H1 (cell line): ENCODE measurements at regions of chr1 and their contacts with region 1.

Region 1: GRCh38 chr1:92749024-92749634 is 35.8 kb downstream of the EVI5 start:
- DNase-seq: no peak
- H3K4me3 ChIP-seq: no peak overlapping the region
- H3K27ac ChIP-seq: no peak overlapping the region
- H3K4me1 ChIP-seq: no peaks in the 10 kb centered on the region
- H3K27me3 ChIP-seq: no peaks in the 10 kb centered on the region
- CTCF ChIP-seq: peak; percentile 15 to 75 (median 72)
- EP300 ChIP-seq: no peak
- POLR2A ChIP-seq: no peak
- RAD21 ChIP-seq: peak; percentile 71 to 75

Region 2: DNA sequence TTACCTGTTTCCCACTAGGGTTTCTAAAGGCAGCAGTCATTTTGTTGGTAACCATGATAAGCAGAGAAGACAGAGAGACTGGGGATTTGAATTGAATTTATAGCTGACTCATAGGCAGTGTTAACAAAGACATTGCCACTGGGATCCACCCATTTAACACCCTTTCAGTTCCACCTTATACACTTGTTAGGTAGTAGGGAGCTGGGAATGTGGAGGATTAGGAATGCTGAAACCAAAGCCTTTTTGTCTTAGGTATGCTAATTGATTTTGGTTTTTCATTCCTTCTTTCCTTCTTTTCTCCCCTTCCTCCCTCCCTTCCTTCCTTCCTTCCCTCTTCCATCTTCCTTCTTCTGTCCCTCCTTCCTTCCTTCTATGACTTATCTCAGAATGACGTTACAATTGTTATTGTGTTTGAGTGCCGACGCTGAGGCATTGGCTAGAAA is 43.2 kb after region 1 on chr1:
- CTCF ChIA-PET with region 1: interaction called, 13 read pairs
- POLR2A ChIA-PET with region 1: no interaction called
- DNase-seq: no peak
- H3K4me3 ChIP-seq: peak overlapping the region in 1 of 4 experiments; percentile 40; a peak in 1 of 8 replicates
- H3K27ac ChIP-seq: no peak overlapping the region
- H3K4me1 ChIP-seq: peaks cover 0 to 9% (median 2%) of the 10 kb centered on the region in 4 experiments; a peak in 3 of 7 replicates
- H3K27me3 ChIP-seq: no peaks in the 10 kb centered on the region
- CTCF ChIP-seq: no peak
- EP300 ChIP-seq: no peak
- POLR2A ChIP-seq: no peak
- RAD21 ChIP-seq: no peak

Region 3: GRCh38 chr1:92797961-92798360 is 48.8 kb after region 1 on chr1:
- CTCF ChIA-PET with region 1: interaction called, 11 read pairs
- POLR2A ChIA-PET with region 1: no interaction called
- DNase-seq: no peak
- H3K4me3 ChIP-seq: no peak overlapping the region
- H3K27ac ChIP-seq: no peak overlapping the region
- H3K4me1 ChIP-seq: no peaks in the 10 kb centered on the region; a peak in 2 of 7 replicates
- H3K27me3 ChIP-seq: no peaks in the 10 kb centered on the region
- CTCF ChIP-seq: no peak
- EP300 ChIP-seq: no peak
- POLR2A ChIP-seq: no peak
- RAD21 ChIP-seq: no peak

Region 4: GRCh38 chr1:92855246-92855645 is 106.1 kb after region 1 on chr1:
- CTCF ChIA-PET with region 1: no interaction called
- POLR2A ChIA-PET with region 1: no interaction called
- DNase-seq: no peak
- H3K4me3 ChIP-seq: no peak overlapping the region
- H3K27ac ChIP-seq: no peak overlapping the region
- H3K4me1 ChIP-seq: no peaks in the 10 kb centered on the region
- H3K27me3 ChIP-seq: no peaks in the 10 kb centered on the region
- CTCF ChIP-seq: no peak
- EP300 ChIP-seq: no peak
- POLR2A ChIP-seq: no peak
- RAD21 ChIP-seq: no peak